Common myeloid progenitor, CD34-positive (primary cell): ENCODE measurements at regions of chr3 and their contacts with region 1.

Region 1: DNA sequence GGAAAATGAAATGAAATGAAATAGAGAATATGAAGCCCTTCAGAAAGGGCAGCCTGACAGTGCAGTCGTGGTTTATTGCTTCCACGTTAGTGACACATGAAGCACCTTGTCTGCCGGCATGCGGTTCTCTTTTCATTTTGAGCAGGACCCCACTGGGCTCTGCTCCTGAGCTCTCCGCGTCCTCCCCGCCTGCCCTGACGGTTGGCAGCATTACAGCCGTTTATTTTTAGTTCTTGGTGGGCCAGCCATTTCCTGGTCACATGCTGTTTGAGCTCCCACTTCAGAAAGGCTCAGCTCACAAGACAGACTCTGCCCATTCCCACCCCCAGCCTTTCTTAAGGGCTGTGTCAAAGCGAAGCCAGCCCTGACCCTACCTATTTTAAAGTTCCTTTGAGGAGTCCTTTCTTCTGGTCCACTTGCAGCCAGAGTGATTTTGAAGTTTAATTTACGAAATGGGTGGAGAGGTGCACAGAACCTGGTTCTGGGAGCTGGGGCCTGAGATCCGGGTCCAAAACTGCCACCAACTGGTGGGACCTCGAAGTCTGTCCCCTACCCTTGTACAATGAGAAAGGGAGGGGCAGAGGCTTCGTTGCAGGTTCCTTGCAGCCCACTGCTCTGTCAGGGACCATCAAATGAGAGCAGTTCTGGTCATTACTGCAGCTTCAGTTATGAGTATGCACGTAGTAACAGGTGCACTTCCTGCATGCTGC is 60.1 kb downstream of the MGLL start:
- DNase-seq: peak; percentile 58 to 91 (median 80)
- H3K4me3 ChIP-seq: peak overlapping the region in 4 of 7 experiments; percentile 17 to 59 (median 52)
- H3K27ac ChIP-seq: peak overlapping the region; percentile 20 to 75
- H3K4me1 ChIP-seq: peaks cover 8 to 84% (median 73%) of the 10 kb centered on the region in 4 experiments
- H3K27me3 ChIP-seq: no peaks in the 10 kb centered on the region

Region 2: DNA sequence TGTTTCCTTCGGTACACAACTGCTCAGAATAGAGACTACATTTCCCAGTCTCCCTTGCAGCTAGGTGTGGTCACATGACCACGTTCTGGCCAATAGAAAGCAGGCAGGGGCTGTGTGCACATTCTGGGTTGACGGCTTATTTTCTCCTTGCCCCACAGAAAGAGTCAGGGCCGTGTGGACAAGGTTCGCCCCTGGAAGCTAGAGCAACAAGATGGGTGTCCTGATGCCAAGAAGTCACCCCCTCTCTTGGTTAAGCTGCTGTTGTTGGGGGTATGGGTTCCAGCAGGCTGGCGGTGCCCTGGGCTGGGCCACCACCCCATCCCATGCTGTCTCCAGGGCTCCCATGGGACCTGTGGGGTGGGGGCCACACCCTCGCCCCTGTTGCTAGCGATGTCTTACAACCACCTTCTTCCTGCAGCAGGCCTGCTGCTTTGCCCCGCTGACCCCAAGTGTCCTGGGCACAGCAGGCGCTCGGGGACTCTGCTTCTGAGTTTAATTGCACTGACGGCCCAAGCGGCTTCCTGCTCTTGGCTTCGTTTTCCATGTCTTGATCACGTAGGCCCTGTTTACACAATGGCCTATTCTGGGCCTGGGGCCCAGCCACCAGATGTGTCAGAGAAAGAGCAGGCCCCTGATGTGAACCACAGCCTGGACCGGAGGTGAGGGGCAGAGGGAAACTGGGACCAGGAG is 64.5 kb before region 1 on chr3:
- CTCF ChIA-PET with region 1: interaction called, 25 read pairs
- POLR2A ChIA-PET with region 1: no interaction called
- DNase-seq: peak; percentile 55 to 74 (median 73)
- H3K4me3 ChIP-seq: no peak overlapping the region
- H3K27ac ChIP-seq: no peak overlapping the region
- H3K4me1 ChIP-seq: peaks cover 0 to 29% (median 20%) of the 10 kb centered on the region in 4 experiments
- H3K27me3 ChIP-seq: no peaks in the 10 kb centered on the region

Region 3: GRCh38 chr3:127750226-127751031 is 11.8 kb before region 1 on chr3:
- CTCF ChIA-PET with region 1: interaction called, 125 read pairs
- POLR2A ChIA-PET with region 1: interaction called, 4 read pairs
- DNase-seq: peak in 2 of 3 donors; percentile 89 to 91
- H3K4me3 ChIP-seq: peak overlapping the region in 1 of 7 experiments; percentile 1
- H3K27ac ChIP-seq: no peak overlapping the region
- H3K4me1 ChIP-seq: peaks cover 0 to 56% (median 50%) of the 10 kb centered on the region in 4 experiments
- H3K27me3 ChIP-seq: no peaks in the 10 kb centered on the region

Region 4: GRCh38 chr3:127779747-127780146 is 17.5 kb after region 1 on chr3:
- CTCF ChIA-PET with region 1: interaction called, 109 read pairs
- POLR2A ChIA-PET with region 1: interaction called, 5 read pairs
- DNase-seq: peak; percentile 59 to 89 (median 70)
- H3K4me3 ChIP-seq: peak overlapping the region in 2 of 7 experiments; percentile 24 to 25
- H3K27ac ChIP-seq: peak overlapping the region in 1 of 2 experiments; percentile 36
- H3K4me1 ChIP-seq: peaks cover 3 to 55% (median 48%) of the 10 kb centered on the region in 4 experiments
- H3K27me3 ChIP-seq: no peaks in the 10 kb centered on the region

Region 5: GRCh38 chr3:127800508-127800907 is 38.3 kb after region 1 on chr3:
- CTCF ChIA-PET with region 1: interaction called, 10 read pairs
- POLR2A ChIA-PET with region 1: interaction called, 4 read pairs
- DNase-seq: peak; percentile 83 to 98 (median 96)
- H3K4me3 ChIP-seq: peak overlapping the region in 1 of 7 experiments; percentile 41
- H3K27ac ChIP-seq: peak overlapping the region; percentile 89 to 90
- H3K4me1 ChIP-seq: peaks cover 17 to 81% (median 69%) of the 10 kb centered on the region in 4 experiments
- H3K27me3 ChIP-seq: no peaks in the 10 kb centered on the region

Region 6: GRCh38 chr3:127844326-127844942 is 82.2 kb after region 1 on chr3:
- CTCF ChIA-PET with region 1: no interaction called
- POLR2A ChIA-PET with region 1: no interaction called
- DNase-seq: no peak
- H3K4me3 ChIP-seq: no peak overlapping the region
- H3K27ac ChIP-seq: no peak overlapping the region
- H3K4me1 ChIP-seq: no peaks in the 10 kb centered on the region
- H3K27me3 ChIP-seq: no peaks in the 10 kb centered on the region